ENCODE measurements at regions of chr6 and their contacts with region 1.

Region 1: GRCh38 chr6:1335367-1336037 is 23.6 kb downstream of the FOXQ1 start:
- DNase-seq: no peak
- ATAC-seq: peak; percentile 96
- H3K4me3 ChIP-seq: peak overlapping the region; percentile 7 to 33
- H3K27ac ChIP-seq: peak overlapping the region; percentile 94
- H3K4me1 ChIP-seq: peaks cover 40% of the 10 kb centered on the region
- H3K27me3 ChIP-seq: no peaks in the 10 kb centered on the region
- CTCF ChIP-seq: no peak

Region 2: GRCh38 chr6:912871-913835 is 422.3 kb before region 1 on chr6:
- CTCF ChIA-PET with region 1: interaction called, 9 read pairs
- POLR2A ChIA-PET with region 1: no interaction called
- in situ Hi-C with region 1: no loop called
- intact Hi-C with region 1: loop called (anchors 10 kb)
- DNase-seq: no peak
- ATAC-seq: peak; percentile 91
- H3K4me3 ChIP-seq: no peak overlapping the region
- H3K27ac ChIP-seq: no peak overlapping the region
- H3K4me1 ChIP-seq: no peaks in the 10 kb centered on the region; the same call in 1 of the 2 replicates
- H3K27me3 ChIP-seq: no peaks in the 10 kb centered on the region
- CTCF ChIP-seq: peak; percentile 84

Region 3: GRCh38 chr6:1381481-1382330 is 46.2 kb after region 1 on chr6:
- CTCF ChIA-PET with region 1: interaction called, 16 read pairs
- POLR2A ChIA-PET with region 1: no interaction called
- in situ Hi-C with region 1: no loop called
- intact Hi-C with region 1: no loop called
- DNase-seq: no peak
- ATAC-seq: peak; percentile 95
- H3K4me3 ChIP-seq: peak overlapping the region; percentile 46 to 49
- H3K27ac ChIP-seq: no peak overlapping the region
- H3K4me1 ChIP-seq: peaks cover 10% of the 10 kb centered on the region
- H3K27me3 ChIP-seq: no peaks in the 10 kb centered on the region
- CTCF ChIP-seq: peak; percentile 97